Adrenal gland (tissue), 19 donors: ENCODE measurements at regions of chr1 and their contacts with region 1.

Region 1: GRCh38 chr1:119603695-119604094 is 44.4 kb downstream of the ZNF697 start:
- DNase-seq: no peak
- H3K4me3 ChIP-seq: no peak overlapping the region
- H3K27ac ChIP-seq: no peak overlapping the region
- H3K4me1 ChIP-seq: no peaks in the 10 kb centered on the region
- H3K27me3 ChIP-seq: no peaks in the 10 kb centered on the region
- CTCF ChIP-seq: no peak
- POLR2A ChIP-seq: no peak

Region 2: GRCh38 chr1:119204197-119204960 is 399.3 kb before region 1 on chr1:
- intact Hi-C with region 1: no loop called
- DNase-seq: no peak
- H3K4me3 ChIP-seq: no peak overlapping the region
- H3K27ac ChIP-seq: no peak overlapping the region
- H3K4me1 ChIP-seq: no peaks in the 10 kb centered on the region
- H3K27me3 ChIP-seq: no peaks in the 10 kb centered on the region
- CTCF ChIP-seq: no peak
- POLR2A ChIP-seq: no peak

Region 3: GRCh38 chr1:119482531-119483425 is 120.9 kb before region 1 on chr1:
- intact Hi-C with region 1: loop called in 1 of 2 experiments (anchors 10 kb)
- DNase-seq: no peak
- H3K4me3 ChIP-seq: no peak overlapping the region
- H3K27ac ChIP-seq: no peak overlapping the region
- H3K4me1 ChIP-seq: no peaks in the 10 kb centered on the region
- H3K27me3 ChIP-seq: no peaks in the 10 kb centered on the region
- CTCF ChIP-seq: no peak
- POLR2A ChIP-seq: no peak

Region 4: GRCh38 chr1:119531624-119532323 is 71.9 kb before region 1 on chr1:
- intact Hi-C with region 1: no loop called
- DNase-seq: no peak
- H3K4me3 ChIP-seq: no peak overlapping the region
- H3K27ac ChIP-seq: no peak overlapping the region
- H3K4me1 ChIP-seq: no peaks in the 10 kb centered on the region
- H3K27me3 ChIP-seq: no peaks in the 10 kb centered on the region
- CTCF ChIP-seq: no peak
- POLR2A ChIP-seq: no peak